ENCODE measurements at regions of chr22 and their contacts with region 1.

Region 1: DNA sequence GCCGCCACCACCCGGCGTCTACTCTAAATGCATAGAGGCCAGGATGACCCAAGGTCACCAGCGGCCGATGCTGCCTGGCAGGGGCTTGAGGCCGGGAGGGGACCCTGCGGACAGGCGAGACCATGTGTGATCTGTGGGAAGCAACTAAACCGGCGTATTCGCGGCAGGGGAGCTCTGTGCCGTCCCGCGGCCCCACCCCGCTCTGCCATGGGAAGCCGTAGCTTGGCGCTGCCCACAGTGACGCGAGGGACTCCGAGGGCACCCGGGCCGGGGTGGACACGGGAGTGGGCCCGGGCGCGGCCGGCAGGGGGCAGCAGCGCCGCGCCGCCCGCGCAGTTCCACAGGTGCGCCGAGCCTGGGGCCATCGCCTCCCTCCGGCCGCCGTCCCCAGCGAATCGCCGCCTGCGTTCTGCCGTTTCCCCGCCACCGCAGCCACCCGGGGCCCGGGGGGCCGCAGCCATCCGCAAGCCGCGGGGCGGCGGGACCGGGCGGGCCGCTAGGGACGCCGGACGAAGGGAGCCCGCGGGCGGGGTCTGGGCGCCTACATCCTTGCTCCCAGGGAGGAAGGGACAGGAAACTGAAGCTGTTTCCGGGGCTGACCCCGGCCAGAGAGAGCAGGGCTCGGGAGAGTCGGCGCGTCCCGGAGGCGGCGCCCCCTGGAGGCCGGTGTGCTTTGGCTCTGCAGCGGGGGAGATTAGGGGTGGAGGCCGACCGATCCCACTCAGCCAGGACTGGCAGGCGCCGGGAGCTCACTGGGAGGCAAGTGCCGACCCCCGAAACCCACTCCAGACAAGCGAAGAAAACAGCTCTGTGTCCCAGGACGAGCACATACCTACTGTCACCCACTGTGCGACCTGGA is 12.5 kb upstream of the HDHD5 start:
- DNase-seq: peak; percentile 86
- ATAC-seq: peak; percentile 93
- H3K4me3 Mint-ChIP-seq: peak overlapping the region; percentile 73
- H3K27ac Mint-ChIP-seq: peak overlapping the region; percentile 68
- H3K4me1 Mint-ChIP-seq: peaks cover 5% of the 10 kb centered on the region
- H3K27me3 Mint-ChIP-seq: no peaks in the 10 kb centered on the region
- CTCF ChIP-seq: peak; percentile 83

Region 2: DNA sequence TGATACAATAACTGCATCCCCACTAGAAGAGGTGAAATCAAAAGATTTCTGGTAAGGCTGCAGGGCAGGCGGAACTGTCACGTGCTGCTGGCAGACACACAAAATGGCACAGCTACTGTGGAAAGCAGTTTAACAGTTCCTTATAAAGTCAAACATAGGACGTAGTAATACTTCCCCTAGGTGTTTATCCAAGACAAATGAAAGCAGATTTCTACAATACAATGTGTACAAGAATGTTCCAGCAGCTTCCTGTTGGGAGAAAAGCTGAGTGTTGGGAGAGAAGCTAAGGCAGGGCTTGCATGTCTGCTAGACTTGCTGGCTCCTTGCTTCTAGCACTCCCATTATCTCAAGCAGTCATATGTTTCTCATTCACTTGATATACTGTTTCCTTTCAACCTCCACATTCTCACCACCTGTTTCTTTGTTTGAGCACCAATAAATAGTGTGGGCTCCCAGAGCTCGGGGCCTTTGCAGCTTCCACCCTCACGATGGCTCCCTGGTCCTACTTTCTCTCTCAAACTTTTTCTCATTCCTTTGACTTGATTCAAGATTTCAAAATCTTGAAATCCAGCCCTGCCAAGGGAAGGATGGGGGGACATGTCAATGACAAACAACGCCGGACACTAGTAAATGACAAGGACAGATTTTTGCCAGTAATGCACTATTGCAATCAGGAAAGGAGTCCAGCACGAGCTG is 108.0 kb before region 1 on chr22:
- CTCF ChIA-PET with region 1: interaction called, 19 read pairs
- POLR2A ChIA-PET with region 1: no interaction called
- intact Hi-C with region 1: no loop called
- DNase-seq: no peak
- ATAC-seq: no peak
- H3K4me3 Mint-ChIP-seq: no peak overlapping the region
- H3K27ac Mint-ChIP-seq: no peak overlapping the region
- H3K4me1 Mint-ChIP-seq: peaks cover 5% of the 10 kb centered on the region
- H3K27me3 Mint-ChIP-seq: no peaks in the 10 kb centered on the region
- CTCF ChIP-seq: no peak

Region 3: GRCh38 chr22:17084554-17085276 is 86.8 kb before region 1 on chr22 and contains the start of gene IL17RA:
- CTCF ChIA-PET with region 1: interaction called, 94 read pairs
- POLR2A ChIA-PET with region 1: interaction called, 6 read pairs
- intact Hi-C with region 1: loop called (anchors 5 kb)
- DNase-seq: peak; percentile 94
- ATAC-seq: peak; percentile 98
- H3K4me3 Mint-ChIP-seq: peak within 1 kb of the TSS; percentile 81
- H3K27ac Mint-ChIP-seq: peak within 1 kb of the TSS; percentile 85
- H3K4me1 Mint-ChIP-seq: peaks cover 45% of the 10 kb centered on the region
- H3K27me3 Mint-ChIP-seq: no peaks in the 10 kb centered on the region
- CTCF ChIP-seq: no peak
- total RNA-seq, gene IL17RA: 14.0 to 14.2 TPM

Region 4: DNA sequence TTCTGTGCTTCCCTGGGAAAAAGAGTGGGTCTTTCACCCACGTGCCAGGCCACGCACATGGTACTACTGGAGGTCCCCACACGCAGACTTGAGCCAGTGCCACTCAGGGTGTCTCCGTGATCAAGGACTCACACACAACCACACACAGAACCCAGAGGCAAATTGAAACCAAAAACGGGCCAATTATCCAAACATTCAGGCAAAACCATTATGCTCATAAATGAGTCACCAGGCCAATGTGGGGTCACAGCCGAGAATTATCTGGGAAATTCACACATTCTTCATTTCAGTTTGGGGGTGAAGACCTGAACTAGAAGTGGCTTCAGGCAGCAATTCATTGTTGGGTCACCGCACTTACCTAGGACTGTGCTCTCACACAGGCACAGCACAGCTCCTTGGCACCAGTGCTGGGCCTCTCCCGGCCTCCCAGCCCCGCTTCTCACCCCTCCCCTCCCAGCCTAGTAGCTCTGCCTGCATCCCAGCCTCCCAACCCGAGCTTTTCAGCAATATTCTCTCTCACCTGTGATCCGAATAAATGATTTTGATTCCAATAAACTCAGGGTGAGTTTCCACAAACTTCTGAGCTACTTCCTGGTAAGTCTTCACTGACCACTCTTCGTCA is 19.7 kb after region 1 on chr22:
- CTCF ChIA-PET with region 1: interaction called, 19 read pairs
- POLR2A ChIA-PET with region 1: interaction called, 3 read pairs
- intact Hi-C with region 1: no loop called
- DNase-seq: no peak
- ATAC-seq: no peak
- H3K4me3 Mint-ChIP-seq: no peak overlapping the region
- H3K27ac Mint-ChIP-seq: no peak overlapping the region
- H3K4me1 Mint-ChIP-seq: peaks cover 3% of the 10 kb centered on the region
- H3K27me3 Mint-ChIP-seq: no peaks in the 10 kb centered on the region
- CTCF ChIP-seq: no peak

Region 5: DNA sequence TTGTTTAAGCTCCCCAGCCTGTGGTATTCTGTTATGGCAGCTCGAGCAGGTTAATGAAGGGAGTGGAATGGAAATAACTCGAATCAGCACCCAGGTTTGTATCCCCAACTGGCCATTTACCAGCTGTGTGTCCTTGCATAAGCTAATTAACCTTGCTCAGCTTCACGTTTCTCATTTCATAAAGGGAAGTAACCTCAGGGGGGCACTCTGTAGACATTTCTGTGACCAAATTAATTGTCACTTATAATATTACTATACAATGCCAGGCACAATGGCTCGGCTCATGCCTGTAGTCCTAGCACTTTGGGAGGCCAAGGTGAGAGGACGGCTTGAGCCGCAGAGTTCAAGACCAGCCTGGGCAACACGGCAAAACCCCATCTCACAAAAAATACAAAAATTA is 33.9 kb after region 1 on chr22:
- CTCF ChIA-PET with region 1: interaction called, 11 read pairs
- POLR2A ChIA-PET with region 1: no interaction called
- intact Hi-C with region 1: no loop called
- DNase-seq: no peak
- ATAC-seq: no peak
- H3K4me3 Mint-ChIP-seq: no peak overlapping the region
- H3K27ac Mint-ChIP-seq: no peak overlapping the region
- H3K4me1 Mint-ChIP-seq: peaks cover 6% of the 10 kb centered on the region
- H3K27me3 Mint-ChIP-seq: no peaks in the 10 kb centered on the region
- CTCF ChIP-seq: peak; percentile 16

Region 6: GRCh38 chr22:17396549-17396948 is 225.0 kb after region 1 on chr22:
- CTCF ChIA-PET with region 1: no interaction called
- POLR2A ChIA-PET with region 1: no interaction called
- intact Hi-C with region 1: no loop called
- DNase-seq: no peak
- ATAC-seq: no peak
- H3K4me3 Mint-ChIP-seq: no peak overlapping the region
- H3K27ac Mint-ChIP-seq: no peak overlapping the region
- H3K4me1 Mint-ChIP-seq: no peaks in the 10 kb centered on the region
- H3K27me3 Mint-ChIP-seq: no peaks in the 10 kb centered on the region
- CTCF ChIP-seq: no peak

Region 7: DNA sequence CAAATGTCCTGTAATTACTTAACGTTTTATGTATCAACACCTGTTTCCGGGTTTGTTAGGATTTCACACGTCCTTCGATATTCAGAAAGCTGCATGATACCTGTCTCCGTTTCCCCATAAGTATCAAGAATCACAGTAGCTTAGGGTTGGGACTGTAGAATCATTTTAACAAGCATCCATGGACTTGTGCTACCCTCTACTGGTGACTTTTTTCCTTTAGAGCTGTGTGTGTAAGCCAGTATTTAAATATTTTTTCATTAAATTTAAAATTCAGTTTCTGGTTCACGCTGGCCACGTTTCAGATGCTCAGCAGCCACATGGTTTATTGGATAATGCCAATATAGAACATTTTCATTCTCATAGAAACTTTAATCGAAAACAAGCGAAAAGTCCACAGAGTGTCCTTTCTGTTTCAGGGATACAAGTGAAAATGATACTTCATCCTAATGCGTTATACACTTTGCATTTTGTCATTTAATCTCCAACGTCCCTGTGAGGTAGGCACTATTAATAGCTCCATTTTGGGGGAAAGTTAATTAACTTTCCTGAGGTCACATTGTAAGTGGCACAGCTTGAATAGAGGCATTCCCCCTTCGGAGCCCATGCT is 330.2 kb after region 1 on chr22:
- CTCF ChIA-PET with region 1: interaction called, 39 read pairs
- POLR2A ChIA-PET with region 1: no interaction called
- intact Hi-C with region 1: loop called (anchors 5 kb)
- DNase-seq: peak; percentile 34
- ATAC-seq: peak; percentile 78
- H3K4me3 Mint-ChIP-seq: no peak overlapping the region
- H3K27ac Mint-ChIP-seq: no peak overlapping the region
- H3K4me1 Mint-ChIP-seq: no peaks in the 10 kb centered on the region
- H3K27me3 Mint-ChIP-seq: peaks cover 4% of the 10 kb centered on the region
- CTCF ChIP-seq: peak; percentile 66

Measured in activated CD8-positive, alpha-beta T cell treated with anti-CD3 and anti-CD28 coated beads for 36 hours (primary cell).